Panc1 (cell line): ENCODE measurements at regions of chr5 and their contacts with region 1.

Region 1: DNA sequence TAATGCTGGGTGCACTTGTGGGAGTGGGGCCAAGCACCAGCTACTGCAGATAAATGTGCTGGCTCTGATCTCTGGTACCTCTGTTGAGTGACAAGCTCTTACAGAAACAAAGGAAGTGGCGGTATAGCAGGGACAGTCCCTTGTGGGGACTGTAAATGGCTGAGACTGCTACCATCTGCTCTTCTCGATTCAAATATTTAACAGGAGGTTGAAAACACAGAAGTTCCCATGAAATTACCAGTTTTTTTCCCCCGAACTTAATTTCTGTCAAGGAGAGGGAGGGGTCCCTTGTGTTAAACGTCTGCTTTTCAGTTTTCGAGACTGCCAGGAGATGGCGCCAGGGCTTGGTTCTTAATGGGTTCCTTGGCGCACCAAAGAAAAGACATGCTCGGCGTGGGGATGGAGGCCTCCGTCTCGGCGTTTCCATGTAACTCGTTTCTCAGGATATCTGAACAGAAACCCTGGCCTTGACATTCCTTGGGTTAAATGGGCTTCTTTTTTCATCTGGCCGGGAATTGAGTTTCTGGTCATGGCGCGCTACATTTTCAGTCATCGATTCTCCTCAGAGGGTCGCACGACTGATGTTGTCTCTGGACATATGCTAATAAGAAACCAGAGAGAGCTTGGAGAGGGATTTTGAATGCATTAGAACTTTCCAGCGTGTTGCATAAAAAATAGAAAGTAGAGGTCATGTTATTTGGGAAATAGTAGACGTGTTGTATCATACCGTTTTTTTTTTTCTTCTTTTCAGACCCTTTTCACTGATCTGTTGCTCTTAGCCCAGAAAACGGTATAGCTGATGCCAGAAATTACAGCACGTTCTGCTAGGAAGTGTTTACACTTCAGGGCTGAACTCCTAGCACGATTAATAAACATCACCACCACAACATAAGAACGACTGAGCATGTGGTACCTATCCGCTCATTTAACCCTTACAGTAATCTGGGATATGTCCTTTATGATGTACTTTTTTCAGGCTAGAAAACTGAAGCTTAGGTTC is 64.0 kb downstream of the CARTPT start:
- DNase-seq: peak; percentile 47
- ATAC-seq: peak; percentile 94
- H3K4me3 ChIP-seq: peak overlapping the region in 1 of 2 experiments; percentile 26; a peak in 2 of 4 replicates
- H3K27ac ChIP-seq: no peak overlapping the region
- H3K4me1 ChIP-seq: 0 out of 2 replicates have a peak, but pooled peaks cover 3% of the 10 kb centered on the region
- H3K27me3 ChIP-seq: peaks cover 7% of the 10 kb centered on the region; the same call in 1 of the 2 replicates
- CTCF ChIP-seq: peak; percentile 92

Region 2: DNA sequence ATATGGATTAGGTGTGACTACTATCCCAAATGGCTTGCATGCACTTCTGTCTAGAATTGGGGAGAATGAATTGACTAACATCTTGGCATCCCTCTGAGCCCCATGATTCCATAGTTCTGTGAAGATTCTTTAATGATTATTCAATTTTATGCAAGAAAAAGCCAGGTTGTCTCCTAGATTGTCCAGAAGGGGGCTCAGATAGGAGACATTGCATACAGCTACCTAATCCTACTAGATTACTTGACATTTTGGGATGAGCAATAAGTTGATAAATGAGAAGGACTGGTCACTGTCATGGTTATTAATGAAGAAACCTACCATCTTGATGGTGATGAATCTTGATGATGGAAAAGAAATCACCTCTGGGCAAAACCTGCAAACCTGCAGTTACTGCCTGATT is 53.0 kb after region 1 on chr5:
- CTCF ChIA-PET with region 1: no interaction called
- POLR2A ChIA-PET with region 1: no interaction called
- in situ Hi-C with region 1: no loop called
- intact Hi-C with region 1: no loop called
- DNase-seq: no peak
- ATAC-seq: no peak
- H3K4me3 ChIP-seq: no peak overlapping the region
- H3K27ac ChIP-seq: no peak overlapping the region
- H3K4me1 ChIP-seq: no peaks in the 10 kb centered on the region
- H3K27me3 ChIP-seq: no peaks in the 10 kb centered on the region; the same call in 1 of the 2 replicates
- CTCF ChIP-seq: peak; percentile 22; the same call in 1 of the 2 replicates

Region 3: DNA sequence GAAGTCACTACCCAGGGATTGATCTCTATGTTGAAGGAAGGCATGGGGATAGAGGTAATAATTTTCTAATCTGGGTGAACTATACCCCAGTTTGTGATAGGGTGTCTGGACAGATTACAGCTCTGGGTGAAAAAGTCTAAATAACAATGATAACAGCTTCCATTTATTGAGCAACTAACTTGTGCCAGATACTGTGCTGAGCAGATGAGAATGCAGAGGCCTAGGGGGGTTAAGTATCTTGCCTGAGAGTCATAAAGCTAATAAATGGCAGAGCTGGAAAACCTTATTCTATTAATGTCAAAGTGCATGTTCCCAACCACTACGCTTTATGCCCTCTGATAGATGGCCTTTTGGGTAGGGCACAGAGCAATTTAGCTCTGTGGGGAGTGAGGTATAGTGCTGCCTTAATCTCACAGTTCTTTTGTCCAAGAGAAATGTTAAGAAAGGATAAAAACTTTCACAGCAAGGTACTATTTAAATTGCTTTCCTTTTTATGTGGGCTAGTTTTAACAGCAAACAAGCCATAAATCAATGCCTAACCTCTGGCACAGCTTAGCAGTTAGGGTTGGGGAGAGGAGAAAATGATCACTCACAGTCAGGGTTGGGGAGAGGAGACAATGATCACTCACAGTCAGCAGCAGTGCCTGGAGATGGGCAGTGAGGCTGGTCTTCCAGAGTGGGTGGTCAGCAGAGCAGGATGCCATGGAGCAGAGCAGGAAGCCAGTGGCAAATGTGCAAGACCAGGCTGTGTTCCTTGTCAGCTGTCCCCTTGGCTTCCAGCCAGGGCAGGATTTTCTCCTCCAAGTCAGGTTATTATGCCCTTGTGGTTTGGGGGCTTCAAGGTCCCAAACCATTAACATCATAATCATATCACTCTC is 123.0 kb after region 1 on chr5:
- CTCF ChIA-PET with region 1: no interaction called
- POLR2A ChIA-PET with region 1: no interaction called
- in situ Hi-C with region 1: no loop called
- intact Hi-C with region 1: loop called (anchors 10 kb)
- DNase-seq: no peak
- ATAC-seq: no peak
- H3K4me3 ChIP-seq: no peak overlapping the region
- H3K27ac ChIP-seq: no peak overlapping the region
- H3K4me1 ChIP-seq: no peaks in the 10 kb centered on the region
- H3K27me3 ChIP-seq: no peaks in the 10 kb centered on the region
- CTCF ChIP-seq: no peak

Region 4: DNA sequence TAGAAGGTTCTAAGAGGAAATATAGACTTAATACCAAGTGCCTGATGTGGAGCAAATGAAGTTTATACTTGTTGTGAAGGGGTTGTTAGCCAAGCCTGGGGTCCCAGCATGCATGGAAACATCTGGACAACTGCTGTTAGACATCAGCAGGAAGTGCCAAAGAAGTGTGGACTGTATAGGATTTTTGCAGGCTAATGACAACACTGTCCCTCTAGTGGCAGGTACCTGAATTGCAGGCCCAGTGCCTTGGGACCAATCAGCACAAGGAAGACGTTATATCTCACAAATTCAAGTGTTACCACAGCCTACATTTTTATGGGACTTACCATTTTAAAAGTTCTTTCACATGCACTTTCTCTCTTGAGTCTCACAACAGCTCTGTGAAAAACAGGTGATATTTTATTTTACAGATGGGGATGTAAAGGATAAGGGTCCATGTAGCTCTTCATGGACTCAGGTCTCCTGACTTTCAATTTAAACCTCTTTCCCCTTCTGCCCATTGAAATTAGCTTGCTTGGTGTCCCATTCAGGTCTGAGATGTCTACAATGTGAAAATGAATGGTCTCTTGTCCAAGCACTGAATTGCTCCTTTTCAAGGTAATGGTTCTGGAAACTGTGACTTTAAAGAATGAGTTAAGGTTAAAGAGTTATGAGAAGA is 235.2 kb after region 1 on chr5:
- CTCF ChIA-PET with region 1: no interaction called
- POLR2A ChIA-PET with region 1: no interaction called
- in situ Hi-C with region 1: no loop called
- intact Hi-C with region 1: loop called (anchors 5 kb)
- DNase-seq: peak; percentile 71
- ATAC-seq: peak; percentile 87; the same call in 1 of the 2 replicates
- H3K4me3 ChIP-seq: no peak overlapping the region
- H3K27ac ChIP-seq: no peak overlapping the region
- H3K4me1 ChIP-seq: no peaks in the 10 kb centered on the region
- H3K27me3 ChIP-seq: peaks cover 14% of the 10 kb centered on the region
- CTCF ChIP-seq: peak; percentile 96

Region 5: DNA sequence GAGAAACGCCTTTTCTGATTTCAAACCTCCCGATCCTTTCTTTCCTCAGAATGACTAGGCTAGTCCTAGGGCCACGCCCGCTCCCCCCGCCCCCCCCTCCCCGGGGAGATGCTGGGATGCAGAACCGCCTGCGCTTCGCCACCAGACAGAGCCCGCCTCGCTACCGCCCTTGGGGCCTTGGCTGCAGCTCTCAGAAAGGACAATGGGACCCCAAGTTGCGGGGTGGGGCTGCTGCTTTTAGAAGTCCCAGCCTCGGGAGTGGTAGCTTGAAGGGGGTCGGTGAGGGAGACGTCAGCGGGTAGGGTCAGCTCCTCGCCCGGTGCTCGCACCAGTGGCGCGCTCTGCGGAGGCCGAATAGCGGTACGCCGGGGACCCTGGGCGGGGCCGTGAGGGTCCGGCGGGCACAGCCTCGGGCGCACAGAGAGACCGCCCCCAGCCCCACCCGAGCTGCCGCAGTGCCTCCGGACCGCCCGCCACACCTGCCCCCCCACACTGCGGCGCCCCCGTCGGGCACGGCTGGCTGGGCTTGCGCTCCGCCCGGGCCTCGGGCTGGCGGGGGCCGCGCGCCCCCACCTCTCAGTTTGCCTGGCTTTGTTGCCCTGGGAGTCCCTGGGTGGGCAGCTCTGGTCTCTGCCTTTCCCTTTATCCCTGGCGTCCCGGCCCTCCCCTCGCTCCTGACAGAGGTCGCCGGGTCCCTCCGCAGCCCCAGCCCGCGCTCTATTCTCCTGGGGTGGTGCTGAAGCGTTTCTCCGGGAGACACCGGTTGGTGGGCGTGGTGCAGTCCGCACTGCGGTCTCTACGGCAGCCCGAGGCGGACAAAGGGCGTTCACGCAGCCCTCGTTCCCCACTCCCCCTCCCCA is 325.4 kb after region 1 on chr5:
- CTCF ChIA-PET with region 1: interaction called, 4 read pairs
- POLR2A ChIA-PET with region 1: no interaction called
- in situ Hi-C with region 1: no loop called
- intact Hi-C with region 1: loop called (anchors 10 kb)
- DNase-seq: no peak
- ATAC-seq: peak; percentile 80
- H3K4me3 ChIP-seq: peak overlapping the region; percentile 80 to 93
- H3K27ac ChIP-seq: peak overlapping the region; percentile 86
- H3K4me1 ChIP-seq: peaks cover 19% of the 10 kb centered on the region
- H3K27me3 ChIP-seq: no peaks in the 10 kb centered on the region; the same call in 1 of the 2 replicates
- CTCF ChIP-seq: no peak

Region 6: DNA sequence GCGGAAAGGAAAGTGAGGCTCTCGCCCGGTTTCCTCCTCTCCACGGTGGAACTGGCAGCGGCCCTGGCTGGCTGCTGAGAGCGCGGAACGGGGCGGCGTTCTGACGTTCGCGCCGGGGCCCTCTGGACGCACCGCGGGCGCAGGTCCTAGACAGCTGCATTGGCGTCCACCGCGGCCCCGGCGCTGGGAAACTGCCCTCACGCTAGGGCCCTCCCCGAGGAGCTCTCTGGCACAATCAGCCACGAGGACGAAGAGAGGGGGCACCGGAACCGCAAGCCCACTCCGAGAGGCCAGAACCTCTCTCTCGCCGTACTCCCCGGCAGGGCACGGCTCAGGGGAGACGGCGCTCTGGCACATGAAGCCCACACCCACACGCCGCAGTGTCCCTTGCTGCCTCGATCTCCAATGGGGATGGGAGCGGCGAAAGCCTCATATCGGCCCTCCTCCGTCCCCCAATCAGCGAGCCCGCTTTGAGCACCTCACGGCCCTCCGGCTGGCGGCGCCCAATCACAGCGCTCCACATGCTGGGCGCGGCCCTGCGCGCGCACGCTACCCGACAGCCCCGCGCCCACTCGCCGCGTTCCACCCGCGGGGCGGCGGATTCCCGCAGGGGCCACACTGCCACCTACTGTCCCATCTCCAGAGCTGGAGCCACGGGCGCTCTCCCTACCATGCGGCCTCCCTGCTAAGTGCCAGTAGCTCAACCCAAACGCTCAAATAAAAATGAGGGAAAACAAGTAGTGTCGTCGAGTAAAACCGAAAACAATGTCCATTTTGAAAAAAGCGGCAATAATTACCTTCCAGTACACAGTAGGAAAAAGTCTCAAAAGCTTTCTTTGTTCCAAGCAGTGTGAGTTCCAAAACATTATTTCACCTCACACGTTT is 525.1 kb after region 1 on chr5:
- CTCF ChIA-PET with region 1: interaction called, 7 read pairs
- POLR2A ChIA-PET with region 1: no interaction called
- in situ Hi-C with region 1: no loop called
- intact Hi-C with region 1: loop called (anchors 2 kb)
- DNase-seq: peak; percentile 85
- ATAC-seq: peak; percentile 99
- H3K4me3 ChIP-seq: peak overlapping the region; percentile 63 to 81
- H3K27ac ChIP-seq: peak overlapping the region; percentile 97
- H3K4me1 ChIP-seq: peaks cover 25% of the 10 kb centered on the region
- H3K27me3 ChIP-seq: no peaks in the 10 kb centered on the region
- CTCF ChIP-seq: peak; percentile 96